Activated CD4-positive, alpha-beta memory T cell treated with anti-CD3 and anti-CD28 coated beads, Interleukin-2, amount 10 ng/mL, durations not matched to agents 7 days and 5 days (primary cell): ENCODE measurements at regions of chr14 and their contacts with region 1.

Region 1: DNA sequence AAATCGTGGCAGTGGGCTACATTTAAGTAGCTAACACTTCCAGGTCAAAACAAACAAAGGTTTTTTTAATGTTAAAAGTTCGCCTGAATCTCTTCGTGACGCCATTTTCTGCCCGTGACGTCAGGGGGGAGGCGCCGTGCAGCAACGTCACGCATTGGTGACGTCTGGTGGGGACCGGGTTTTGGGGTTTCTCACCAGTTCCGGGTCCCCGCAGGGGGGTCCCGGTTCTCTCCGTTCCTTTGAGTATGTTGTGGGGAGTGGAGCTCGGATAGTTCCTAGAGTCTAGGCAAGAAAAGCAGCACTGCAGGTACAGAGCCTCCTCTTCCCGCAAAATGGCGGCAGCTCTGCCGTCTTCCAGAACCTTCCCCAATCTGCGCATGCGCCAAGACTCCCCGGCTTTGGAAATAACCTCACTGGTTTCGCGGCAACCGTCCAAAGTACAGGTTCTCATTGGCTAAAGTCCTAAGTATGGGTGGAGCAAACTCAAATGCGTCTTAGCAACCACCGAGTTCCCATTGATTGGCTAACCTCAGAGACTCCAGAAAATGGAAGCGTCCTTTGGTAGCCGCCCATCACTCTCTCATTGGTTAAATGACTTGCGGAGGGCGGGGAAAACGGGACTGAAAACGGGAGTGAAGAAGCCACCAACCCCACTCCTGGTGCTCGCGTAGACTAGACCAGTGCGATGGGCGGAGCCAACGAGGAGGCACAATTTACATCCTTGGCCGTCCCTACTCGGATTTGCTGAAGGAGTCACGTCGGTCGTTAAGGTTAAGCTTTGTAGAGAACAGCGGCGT is at the start of gene RBM23:
- DNase-seq: peak; percentile 100
- H3K4me3 Mint-ChIP-seq: peak within 1 kb of the TSS; percentile 90
- H3K27ac Mint-ChIP-seq: peak within 1 kb of the TSS; percentile 98
- H3K4me1 Mint-ChIP-seq: peaks cover 42% of the 10 kb centered on the region
- H3K27me3 Mint-ChIP-seq: no peaks in the 10 kb centered on the region
- total RNA-seq, gene RBM23: 71.8 to 73.5 TPM

Region 2: DNA sequence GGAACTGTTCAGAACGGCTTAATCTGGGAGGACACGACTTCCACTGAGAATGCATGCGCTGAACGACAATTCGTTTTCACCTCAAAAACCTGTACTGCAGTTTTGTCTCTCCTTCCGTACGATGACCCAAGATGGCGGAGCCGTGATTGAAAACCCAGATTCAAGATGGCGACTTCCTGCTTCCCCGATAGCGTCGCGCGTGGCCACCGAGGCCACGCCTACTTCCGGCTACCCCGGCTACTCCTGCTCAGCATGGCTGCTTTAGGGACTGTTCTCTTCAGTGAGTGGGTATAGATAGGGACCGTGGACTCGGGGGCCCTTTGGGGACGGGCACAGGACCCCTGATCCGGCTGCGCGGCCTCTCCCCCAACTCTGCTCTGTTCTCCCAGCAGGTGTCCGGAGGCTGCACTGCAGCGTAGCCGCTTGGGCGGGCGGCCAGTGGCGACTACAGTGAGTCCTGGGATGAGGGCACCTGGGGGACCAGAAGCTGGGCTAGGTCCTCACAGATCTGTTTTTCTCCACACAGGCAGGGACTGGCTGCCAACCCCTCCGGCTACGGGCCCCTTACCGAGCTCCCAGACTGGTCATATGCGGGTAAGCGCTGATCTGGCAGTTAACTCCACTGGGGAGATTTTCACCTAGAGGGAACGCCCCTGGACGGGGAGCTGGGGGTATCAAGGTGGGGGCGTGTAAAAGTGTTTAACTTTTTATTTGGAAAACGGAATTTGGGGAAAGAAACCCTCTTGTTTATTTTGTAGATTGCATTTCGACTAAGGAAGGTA is 89.2 kb before region 1 on chr14 and contains the start of gene MRPL52:
- CTCF ChIA-PET with region 1: interaction called, 3 read pairs
- POLR2A ChIA-PET with region 1: interaction called, 10 read pairs
- DNase-seq: peak; percentile 93
- H3K4me3 Mint-ChIP-seq: peak within 1 kb of the TSS; percentile 87
- H3K27ac Mint-ChIP-seq: peak within 1 kb of the TSS; percentile 90
- H3K4me1 Mint-ChIP-seq: peaks cover 33% of the 10 kb centered on the region
- H3K27me3 Mint-ChIP-seq: no peaks in the 10 kb centered on the region
- total RNA-seq, gene MRPL52: 108 to 119 TPM

Region 3: DNA sequence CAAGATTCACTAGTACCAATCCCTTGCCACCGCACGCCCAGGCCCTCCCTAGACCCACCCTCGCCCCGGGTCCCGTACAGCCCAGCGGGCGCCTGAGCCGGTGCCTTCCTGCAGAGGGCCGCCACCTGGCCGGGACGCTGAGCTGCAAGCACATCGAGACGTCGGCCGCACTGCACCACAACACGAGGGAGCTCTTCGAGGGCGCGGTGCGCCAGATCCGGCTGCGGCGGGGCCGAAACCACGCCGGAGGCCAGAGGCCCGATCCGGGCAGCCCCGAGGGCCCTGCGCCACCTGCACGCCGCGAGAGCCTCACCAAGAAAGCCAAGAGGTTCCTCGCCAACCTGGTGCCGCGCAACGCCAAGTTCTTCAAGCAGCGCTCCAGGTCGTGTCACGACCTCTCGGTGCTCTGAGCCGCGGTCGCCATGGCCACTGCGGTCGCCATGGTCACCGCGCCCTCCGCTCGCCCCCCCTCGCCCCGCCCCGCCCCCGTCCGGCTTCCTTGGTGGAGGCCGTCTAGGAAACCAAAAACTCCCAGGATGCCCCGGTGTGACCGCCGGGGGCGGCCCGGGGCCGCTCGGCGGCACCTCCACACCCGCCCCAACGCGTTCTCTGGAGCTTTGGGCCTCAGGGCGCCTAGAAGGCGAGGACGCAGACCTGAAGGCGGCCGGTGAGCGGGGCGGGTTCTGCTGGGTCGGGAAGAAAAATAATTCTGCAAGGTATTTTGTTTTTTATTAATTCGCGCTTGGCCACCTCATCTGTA is 32.3 kb before region 1 on chr14:
- CTCF ChIA-PET with region 1: interaction called, 6 read pairs
- POLR2A ChIA-PET with region 1: interaction called, 20 read pairs
- DNase-seq: peak; percentile 85
- H3K4me3 Mint-ChIP-seq: peak overlapping the region; percentile 84
- H3K27ac Mint-ChIP-seq: peak overlapping the region; percentile 89
- H3K4me1 Mint-ChIP-seq: peaks cover 44% of the 10 kb centered on the region
- H3K27me3 Mint-ChIP-seq: peaks cover 23% of the 10 kb centered on the region

Region 4: DNA sequence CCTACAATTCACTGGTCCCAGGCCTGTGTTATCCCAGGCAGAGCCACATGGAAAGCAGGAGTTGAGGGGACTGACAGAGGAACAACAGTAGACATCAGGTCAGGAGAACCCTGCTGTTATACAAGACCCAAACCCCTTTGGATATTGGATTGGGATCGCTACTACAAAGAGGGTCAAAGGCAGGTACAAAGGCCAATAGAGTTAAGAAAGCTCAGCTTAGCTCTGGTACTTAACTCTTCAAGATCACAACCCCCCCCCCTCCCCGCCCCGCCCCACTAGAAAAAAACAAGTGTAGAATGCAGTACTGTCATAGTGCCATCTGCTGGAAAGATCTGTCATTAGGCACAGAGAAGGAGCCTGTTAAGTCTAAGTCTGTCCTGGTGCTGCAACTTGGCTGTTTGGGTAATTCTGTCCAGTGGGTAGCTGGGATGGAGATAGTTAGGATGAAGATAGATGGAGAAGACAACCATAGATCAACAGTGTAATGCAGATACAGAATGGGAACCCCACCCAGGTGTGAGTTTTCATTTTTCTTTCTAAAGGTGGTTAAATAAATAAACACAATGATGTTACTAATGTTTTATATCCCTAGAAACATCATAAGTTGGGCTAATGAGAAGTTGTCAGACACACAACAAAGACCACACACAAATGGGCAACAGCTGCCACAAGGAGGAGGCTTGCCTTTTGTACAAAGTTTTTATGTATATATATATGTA is 18.8 kb before region 1 on chr14:
- CTCF ChIA-PET with region 1: interaction called, 17 read pairs
- POLR2A ChIA-PET with region 1: interaction called, 16 read pairs
- DNase-seq: peak; percentile 48
- H3K4me3 Mint-ChIP-seq: no peak overlapping the region
- H3K27ac Mint-ChIP-seq: peak overlapping the region; percentile 44
- H3K4me1 Mint-ChIP-seq: peaks cover 19% of the 10 kb centered on the region
- H3K27me3 Mint-ChIP-seq: no peaks in the 10 kb centered on the region

Region 5: DNA sequence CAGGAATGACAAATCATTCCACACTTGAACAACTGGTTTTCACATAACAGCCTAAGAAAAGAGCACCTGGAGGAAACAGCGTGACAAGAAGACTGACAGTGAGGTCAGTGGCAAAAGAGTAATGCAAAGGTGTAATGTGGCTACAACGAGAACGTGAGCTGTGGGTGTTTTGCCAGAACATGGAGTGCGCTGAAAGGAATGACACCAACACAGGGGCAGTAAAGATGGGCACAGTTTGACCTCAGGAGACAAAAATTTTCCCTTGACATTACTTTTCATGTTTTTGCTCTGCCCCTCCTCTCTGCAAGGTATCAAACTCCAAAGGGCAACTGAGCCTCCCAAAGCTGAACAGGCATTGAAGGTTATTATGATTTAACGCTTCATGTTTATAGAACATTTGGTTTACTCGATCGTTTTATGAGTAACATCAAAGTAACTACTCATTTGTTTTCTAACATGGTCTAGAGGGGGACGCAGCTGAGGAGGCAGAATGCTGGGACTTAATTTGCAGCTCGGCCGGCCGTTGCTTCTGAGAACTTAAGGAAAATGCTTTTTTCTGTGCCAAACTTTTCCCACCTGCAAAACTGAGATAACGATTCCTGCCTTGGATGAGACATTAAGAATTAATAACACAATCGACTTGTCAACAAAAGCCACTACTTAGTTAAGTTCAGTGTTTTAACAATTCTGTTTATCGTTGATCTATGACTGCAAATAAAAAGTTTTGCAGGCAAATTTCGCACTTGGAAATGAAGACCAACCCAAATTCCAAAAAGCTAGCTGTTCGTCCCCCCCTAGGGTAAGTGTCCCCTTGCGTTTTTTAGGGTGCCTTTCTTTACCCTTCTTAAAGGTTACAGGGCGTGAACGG is 36.9 kb after region 1 on chr14:
- CTCF ChIA-PET with region 1: no interaction called
- POLR2A ChIA-PET with region 1: interaction called, 22 read pairs
- DNase-seq: no peak
- H3K4me3 Mint-ChIP-seq: peak overlapping the region; percentile 91
- H3K27ac Mint-ChIP-seq: peak overlapping the region; percentile 79
- H3K4me1 Mint-ChIP-seq: peaks cover 30% of the 10 kb centered on the region
- H3K27me3 Mint-ChIP-seq: peaks cover 3% of the 10 kb centered on the region

Region 6: DNA sequence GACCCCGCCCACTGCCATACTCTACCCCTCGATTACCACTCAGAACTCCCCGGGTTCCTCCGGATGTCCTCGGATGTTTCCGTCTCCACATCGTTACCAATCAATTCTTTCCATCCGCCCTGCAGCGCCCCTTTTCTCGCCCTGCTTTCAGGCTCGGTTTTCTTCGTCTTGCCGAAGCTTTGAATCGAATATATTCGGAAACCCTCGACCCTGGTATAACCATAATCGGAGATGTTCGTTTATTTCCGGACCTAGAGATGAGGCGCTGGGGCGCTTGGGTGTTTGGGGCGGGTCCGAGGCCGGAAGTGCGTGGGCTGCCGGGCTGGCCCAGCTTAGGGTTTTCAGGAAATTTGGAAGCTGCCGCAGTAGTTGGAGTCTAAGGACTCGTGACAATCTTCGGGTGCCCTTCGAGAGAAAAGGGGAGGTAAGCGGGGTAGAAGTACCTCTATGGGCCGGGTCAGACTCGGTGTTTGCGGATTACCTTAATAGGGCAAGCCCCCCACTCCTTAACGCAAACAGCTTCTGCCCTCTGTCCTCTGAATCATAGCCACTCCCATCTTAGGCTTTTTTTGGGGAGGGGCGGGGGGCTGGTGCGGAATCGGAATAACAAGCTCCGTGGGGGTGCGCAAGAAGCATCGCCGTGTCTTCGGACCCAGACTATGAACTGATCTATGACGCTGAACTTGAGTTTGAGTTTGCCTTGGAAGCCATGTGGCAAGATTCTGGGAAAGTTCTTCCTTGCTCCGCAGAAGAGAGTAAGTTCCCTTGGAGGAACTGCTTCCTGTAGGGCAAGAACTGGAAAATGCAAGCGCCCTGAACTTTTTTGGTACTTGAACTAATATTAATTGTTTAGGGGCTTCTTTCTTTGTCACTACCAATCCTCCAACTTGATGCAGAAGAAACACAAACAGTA is 176.4 kb after region 1 on chr14 and contains the start of gene C14orf119:
- CTCF ChIA-PET with region 1: no interaction called
- POLR2A ChIA-PET with region 1: interaction called, 12 read pairs
- DNase-seq: peak; percentile 100
- H3K4me3 Mint-ChIP-seq: no peak within 1 kb of the TSS
- H3K27ac Mint-ChIP-seq: no peak within 1 kb of the TSS
- H3K4me1 Mint-ChIP-seq: peaks cover 36% of the 10 kb centered on the region
- H3K27me3 Mint-ChIP-seq: no peaks in the 10 kb centered on the region
- total RNA-seq, gene C14orf119: 49.2 to 55.5 TPM